ENCODE measurements at regions of chr13 and their contacts with region 1.

Region 1: DNA sequence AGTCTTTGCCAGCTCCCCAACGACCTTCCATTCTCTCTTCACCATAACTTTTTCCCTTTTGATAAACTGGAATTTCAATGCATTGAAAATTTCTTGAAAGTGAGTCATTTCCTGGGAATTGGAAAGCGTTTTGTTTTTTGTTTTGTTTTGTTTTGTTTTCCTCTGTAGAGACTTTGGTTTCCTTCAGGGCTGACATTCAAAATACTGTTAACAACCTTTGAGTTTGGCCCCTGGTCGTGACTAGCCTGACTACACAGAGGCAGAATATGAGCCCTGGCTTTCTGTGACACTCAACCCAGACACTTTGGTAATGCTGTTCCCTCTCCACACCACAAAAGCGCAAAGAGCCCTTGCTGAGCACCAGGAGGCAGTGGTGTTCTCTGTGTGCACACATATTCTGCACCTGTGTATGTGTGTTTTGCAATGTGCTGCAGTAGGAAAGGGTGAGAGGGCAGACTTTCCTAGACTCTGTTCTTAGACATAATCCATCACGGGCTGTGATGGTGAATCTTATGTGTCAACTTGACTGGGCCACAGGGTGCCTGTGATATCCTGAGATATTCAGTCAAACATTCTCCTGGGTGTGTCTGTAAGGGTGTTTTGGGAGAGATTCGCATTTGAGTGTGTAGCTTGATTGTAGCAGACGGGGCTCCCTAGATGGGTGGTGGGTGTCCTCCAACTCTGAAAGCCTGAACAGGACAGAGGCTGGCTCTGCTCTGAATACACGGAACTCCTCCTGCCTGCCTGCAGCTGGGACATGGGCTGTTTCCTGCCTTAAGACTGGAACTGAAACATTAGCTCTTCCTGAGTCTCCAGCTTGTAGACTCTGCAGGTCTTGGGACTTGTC is 29.5 kb upstream of the ANKRD10 start:
- DNase-seq: peak in 1 of 3 donors; percentile 27
- ATAC-seq: peak; percentile 79
- H3K4me3 ChIP-seq: no peak overlapping the region
- H3K4me1 ChIP-seq: no peaks in the 10 kb centered on the region
- CTCF ChIP-seq: no peak

Region 2: DNA sequence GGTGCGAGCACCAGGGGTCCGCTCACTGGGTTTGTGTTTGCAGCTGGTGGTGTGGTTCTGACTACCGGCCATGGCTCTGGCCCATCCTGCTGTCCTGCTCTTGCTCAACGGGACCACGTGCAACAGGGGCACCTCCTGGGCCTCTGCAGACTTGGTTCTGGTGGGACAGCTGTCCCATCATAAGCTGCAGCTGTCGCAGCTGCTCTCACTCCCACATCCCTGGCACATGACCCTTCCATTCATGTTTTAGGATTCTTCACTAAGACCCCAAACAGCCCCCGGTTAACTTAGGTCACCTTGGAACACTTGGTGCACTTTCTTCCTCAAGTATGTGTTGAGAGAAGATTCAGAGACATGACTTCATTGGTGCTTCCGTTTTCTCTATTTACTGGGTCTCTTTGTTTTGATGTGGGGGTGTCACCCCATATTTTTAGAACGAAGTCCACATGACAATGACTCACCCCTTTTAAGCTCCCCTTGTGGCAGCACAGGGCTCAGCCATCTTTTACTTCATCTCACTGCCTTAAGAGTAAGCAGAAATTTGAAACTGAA is 102.3 kb after region 1 on chr13:
- intact Hi-C with region 1: loop called in 1 of 2 experiments (anchors 10 kb)
- DNase-seq: no peak
- ATAC-seq: peak; percentile 28
- H3K4me3 ChIP-seq: no peak overlapping the region
- H3K4me1 ChIP-seq: no peaks in the 10 kb centered on the region
- CTCF ChIP-seq: no peak